ENCODE measurements at regions of chr3 and their contacts with region 1.

Region 1: DNA sequence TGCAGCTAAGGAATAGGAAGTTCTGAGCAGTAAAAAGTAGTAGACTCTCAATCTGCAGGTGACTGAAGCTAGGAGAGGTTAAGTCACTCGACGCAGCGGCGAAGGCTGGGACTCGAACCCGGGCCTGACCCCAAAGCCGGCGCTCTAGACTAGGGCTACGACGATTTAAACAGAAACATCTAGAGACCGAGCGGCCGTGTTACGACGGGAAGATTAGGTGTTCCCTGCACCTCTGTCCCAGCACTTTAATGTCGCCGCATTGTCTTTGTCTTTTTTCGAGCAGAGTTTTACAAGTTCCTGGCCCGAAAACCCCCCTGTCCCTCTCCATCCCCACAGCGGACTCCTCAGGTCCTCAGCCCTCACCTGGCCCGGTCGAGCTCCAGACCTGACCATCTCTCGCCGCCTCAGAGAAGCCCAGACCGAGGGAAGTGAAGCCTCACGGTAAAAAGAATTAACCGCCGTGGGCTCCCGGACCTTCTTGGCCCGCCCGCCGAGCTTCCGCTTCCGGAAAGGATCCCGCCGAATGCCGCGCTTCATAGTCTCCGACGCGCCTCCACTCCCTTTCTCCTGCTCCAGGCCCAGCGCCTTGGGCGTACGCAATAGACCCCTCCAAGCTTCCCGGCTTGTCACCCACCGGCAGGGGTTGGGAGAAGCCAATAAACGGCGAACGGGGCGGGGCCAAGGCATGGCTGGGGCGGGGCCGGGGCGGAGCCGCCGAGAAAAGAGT is at the start of gene CCDC14:
- DNase-seq: peak; percentile 92
- ATAC-seq: peak; percentile 98
- H3K4me3 Mint-ChIP-seq: peak within 1 kb of the TSS; percentile 87
- H3K27ac Mint-ChIP-seq: peak within 1 kb of the TSS; percentile 91
- H3K4me1 Mint-ChIP-seq: peaks cover 23% of the 10 kb centered on the region
- H3K27me3 Mint-ChIP-seq: peaks cover 7% of the 10 kb centered on the region
- total RNA-seq, gene CCDC14: 35.4 to 52.4 TPM

Region 2: DNA sequence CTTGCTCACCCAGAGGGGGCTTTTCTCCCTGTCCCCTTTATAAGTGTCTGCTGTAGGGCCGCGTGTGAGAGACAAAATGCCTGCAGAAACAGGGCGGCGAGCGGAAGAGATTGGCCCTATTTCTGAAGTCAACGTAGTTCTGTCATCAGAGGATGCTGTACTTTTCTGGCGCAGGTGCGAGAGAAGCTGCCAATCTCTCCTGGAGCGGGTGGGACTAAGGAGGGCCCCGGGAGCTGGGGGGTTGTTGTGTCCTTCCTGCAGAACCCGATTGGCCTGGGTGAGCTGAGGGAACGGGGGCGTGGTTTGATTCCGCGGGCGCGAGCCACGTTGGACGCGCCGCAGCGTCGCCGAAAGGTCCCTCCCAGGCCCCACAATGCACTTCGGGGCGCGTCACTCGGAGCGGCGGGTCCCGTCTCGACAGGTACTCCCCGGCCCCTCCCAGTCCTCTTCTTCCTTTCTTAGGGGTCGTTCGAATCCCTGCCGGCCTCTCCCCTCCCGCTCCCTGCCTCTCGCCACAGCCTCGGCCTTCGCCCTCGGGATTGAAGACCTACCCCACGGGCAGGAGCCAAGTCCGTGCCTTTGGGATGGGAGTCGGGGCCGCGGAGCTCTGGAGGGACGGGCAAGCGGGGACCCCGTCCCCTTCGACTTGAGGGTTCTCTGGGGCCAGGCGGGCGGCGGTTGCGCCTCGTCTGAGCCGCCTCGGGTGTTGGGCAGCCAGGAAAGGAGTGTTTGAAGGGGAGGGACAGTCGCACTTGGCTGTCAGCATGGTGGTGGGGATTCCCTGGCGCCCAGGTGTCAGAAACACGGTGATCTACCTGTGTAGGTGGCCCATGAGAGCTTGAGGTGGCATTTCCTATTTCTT is 759.1 kb before region 1 on chr3 and contains the start of gene SEC22A:
- CTCF ChIA-PET with region 1: no interaction called
- POLR2A ChIA-PET with region 1: no interaction called
- intact Hi-C with region 1: loop called in 1 of 2 experiments (anchors 2 kb)
- DNase-seq: peak; percentile 98
- ATAC-seq: peak; percentile 99
- H3K4me3 Mint-ChIP-seq: peak within 1 kb of the TSS; percentile 96
- H3K27ac Mint-ChIP-seq: peak within 1 kb of the TSS; percentile 97
- H3K4me1 Mint-ChIP-seq: peaks cover 28% of the 10 kb centered on the region
- H3K27me3 Mint-ChIP-seq: no peaks in the 10 kb centered on the region
- total RNA-seq, gene SEC22A: 13.2 to 16.3 TPM

Region 3: GRCh38 chr3:123584988-123585937 is 375.7 kb before region 1 on chr3 and contains the start of gene HACD2:
- CTCF ChIA-PET with region 1: no interaction called
- POLR2A ChIA-PET with region 1: no interaction called
- intact Hi-C with region 1: loop called in 1 of 2 experiments (anchors 5 kb)
- DNase-seq: peak; percentile 97
- ATAC-seq: peak; percentile 93
- H3K4me3 Mint-ChIP-seq: no peak within 1 kb of the TSS
- H3K27ac Mint-ChIP-seq: peak within 1 kb of the TSS; percentile 87
- H3K4me1 Mint-ChIP-seq: peaks cover 21% of the 10 kb centered on the region
- H3K27me3 Mint-ChIP-seq: no peaks in the 10 kb centered on the region
- total RNA-seq, gene HACD2: 22.1 to 27.7 TPM

Region 4: GRCh38 chr3:123884203-123884831 is 76.6 kb before region 1 on chr3 and contains the start of gene MYLK:
- CTCF ChIA-PET with region 1: no interaction called
- POLR2A ChIA-PET with region 1: no interaction called
- intact Hi-C with region 1: loop called in 1 of 2 experiments (anchors 1 kb)
- DNase-seq: peak; percentile 70
- ATAC-seq: peak; percentile 95
- H3K4me3 Mint-ChIP-seq: peak within 1 kb of the TSS; percentile 61
- H3K27ac Mint-ChIP-seq: no peak within 1 kb of the TSS
- H3K4me1 Mint-ChIP-seq: peaks cover 10% of the 10 kb centered on the region
- H3K27me3 Mint-ChIP-seq: peaks cover 52% of the 10 kb centered on the region
- total RNA-seq, gene MYLK: 0.07 TPM in 1 of 2 experiments, not detected in the other

Region 5: GRCh38 chr3:124032648-124033359 is 71.9 kb after region 1 on chr3:
- CTCF ChIA-PET with region 1: no interaction called
- POLR2A ChIA-PET with region 1: no interaction called
- intact Hi-C with region 1: loop called in 1 of 2 experiments (anchors 2 kb)
- DNase-seq: peak; percentile 85
- ATAC-seq: peak; percentile 93
- H3K4me3 Mint-ChIP-seq: peak overlapping the region; percentile 54
- H3K27ac Mint-ChIP-seq: no peak overlapping the region
- H3K4me1 Mint-ChIP-seq: peaks cover 6% of the 10 kb centered on the region
- H3K27me3 Mint-ChIP-seq: peaks cover 47% of the 10 kb centered on the region

Region 6: GRCh38 chr3:124730129-124730940 is 769.4 kb after region 1 on chr3 and contains the start of gene UMPS:
- CTCF ChIA-PET with region 1: no interaction called
- POLR2A ChIA-PET with region 1: no interaction called
- intact Hi-C with region 1: loop called in 1 of 2 experiments (anchors 1 kb)
- DNase-seq: peak; percentile 97
- ATAC-seq: peak; percentile 99
- H3K4me3 Mint-ChIP-seq: peak within 1 kb of the TSS; percentile 100
- H3K27ac Mint-ChIP-seq: peak within 1 kb of the TSS; percentile 100
- H3K4me1 Mint-ChIP-seq: peaks cover 32% of the 10 kb centered on the region
- H3K27me3 Mint-ChIP-seq: peaks cover 7% of the 10 kb centered on the region
- total RNA-seq, gene UMPS: 35.9 to 42.4 TPM

Measured in activated CD4-positive, alpha-beta T cell treated with anti-CD3 and anti-CD28 coated beads for 36 hours (primary cell).